ENCODE measurements at regions of chr7 and their contacts with region 1.

Region 1: DNA sequence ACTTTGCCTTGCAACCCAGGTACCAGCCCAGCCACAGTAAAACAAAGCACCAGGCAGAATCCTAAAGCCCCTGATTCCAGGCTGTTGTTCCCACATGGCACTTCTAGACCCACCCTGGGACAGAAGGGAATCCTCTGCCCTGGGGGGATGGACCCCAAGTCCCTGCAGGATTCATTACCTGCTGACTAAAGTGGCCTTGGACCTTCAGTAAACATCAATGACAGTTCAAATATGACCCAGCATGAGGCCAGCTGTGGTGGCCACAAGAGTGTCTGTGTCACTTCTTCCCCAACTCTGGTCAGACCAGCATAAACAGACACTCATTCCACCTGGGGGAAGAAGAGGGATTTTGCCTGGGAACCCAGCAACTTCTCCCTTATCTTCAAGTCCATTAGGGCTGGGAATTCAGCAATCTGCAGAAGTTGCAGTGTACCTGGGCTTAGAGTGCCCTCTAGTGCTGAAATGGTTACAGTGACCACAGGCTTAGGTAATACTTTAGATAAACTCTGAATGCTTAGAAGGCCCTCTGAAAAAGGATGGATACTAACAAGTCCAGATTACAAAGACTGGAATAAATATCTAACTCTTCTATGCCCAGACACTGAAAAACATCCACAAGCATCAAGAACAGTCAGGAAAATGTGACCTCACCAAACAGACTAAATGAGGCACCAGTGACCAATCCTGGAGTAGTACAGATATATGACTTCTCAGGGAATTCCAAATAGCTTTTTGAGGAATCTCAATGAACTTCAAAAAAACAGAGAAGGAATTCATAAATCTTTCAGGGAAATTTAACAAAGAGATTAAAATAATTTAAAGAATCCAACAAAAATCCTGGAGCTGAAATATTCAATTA is 108.5 kb upstream of the TMEM168 start:
- DNase-seq: peak; percentile 51
- ATAC-seq: peak; percentile 69
- H3K4me3 Mint-ChIP-seq: no peak overlapping the region
- H3K27ac Mint-ChIP-seq: no peak overlapping the region
- H3K4me1 Mint-ChIP-seq: peaks cover 5% of the 10 kb centered on the region
- H3K27me3 Mint-ChIP-seq: no peaks in the 10 kb centered on the region
- CTCF ChIP-seq: peak; percentile 81

Region 2: GRCh38 chr7:112550468-112551060 is 348.1 kb before region 1 on chr7:
- CTCF ChIA-PET with region 1: interaction called, 13 read pairs
- POLR2A ChIA-PET with region 1: no interaction called
- intact Hi-C with region 1: loop called (anchors 2 kb)
- DNase-seq: peak; percentile 37
- ATAC-seq: peak; percentile 68
- H3K4me3 Mint-ChIP-seq: no peak overlapping the region
- H3K27ac Mint-ChIP-seq: no peak overlapping the region
- H3K4me1 Mint-ChIP-seq: no peaks in the 10 kb centered on the region
- H3K27me3 Mint-ChIP-seq: peaks cover 2% of the 10 kb centered on the region
- CTCF ChIP-seq: peak; percentile 87

Region 3: DNA sequence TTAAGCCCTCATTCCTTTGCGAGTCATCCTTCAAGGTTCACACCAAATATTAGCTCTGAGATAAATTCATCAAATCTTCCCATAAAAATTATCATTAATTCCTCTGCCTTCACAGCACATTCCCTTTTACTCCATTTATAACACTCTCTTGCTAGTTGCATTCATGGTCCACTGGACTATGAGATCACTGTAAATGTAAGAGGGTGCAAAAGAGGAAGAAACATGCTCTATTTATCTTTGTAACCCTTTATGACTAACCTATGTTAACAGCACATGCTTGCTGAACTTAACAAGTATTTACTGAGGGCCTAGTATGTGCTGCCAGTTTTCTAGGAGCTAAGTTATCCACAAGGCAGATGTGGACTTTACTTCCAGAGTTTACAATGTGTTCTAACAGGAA is 21.8 kb before region 1 on chr7:
- CTCF ChIA-PET with region 1: interaction called, 10 read pairs
- POLR2A ChIA-PET with region 1: no interaction called
- intact Hi-C with region 1: no loop called
- DNase-seq: no peak
- ATAC-seq: no peak
- H3K4me3 Mint-ChIP-seq: no peak overlapping the region
- H3K27ac Mint-ChIP-seq: no peak overlapping the region
- H3K4me1 Mint-ChIP-seq: peaks cover 22% of the 10 kb centered on the region
- H3K27me3 Mint-ChIP-seq: no peaks in the 10 kb centered on the region
- CTCF ChIP-seq: no peak

Measured in activated CD8-positive, alpha-beta T cell treated with anti-CD3 and anti-CD28 coated beads for 36 hours (primary cell).